Left colon (tissue), 2 donors: ENCODE measurements at regions of chr3 and their contacts with region 1.

Region 1: GRCh38 chr3:27467545-27467944 is 16.6 kb downstream of the SLC4A7 start:
- DNase-seq: no peak
- ATAC-seq: peak; percentile 69

Region 2: DNA sequence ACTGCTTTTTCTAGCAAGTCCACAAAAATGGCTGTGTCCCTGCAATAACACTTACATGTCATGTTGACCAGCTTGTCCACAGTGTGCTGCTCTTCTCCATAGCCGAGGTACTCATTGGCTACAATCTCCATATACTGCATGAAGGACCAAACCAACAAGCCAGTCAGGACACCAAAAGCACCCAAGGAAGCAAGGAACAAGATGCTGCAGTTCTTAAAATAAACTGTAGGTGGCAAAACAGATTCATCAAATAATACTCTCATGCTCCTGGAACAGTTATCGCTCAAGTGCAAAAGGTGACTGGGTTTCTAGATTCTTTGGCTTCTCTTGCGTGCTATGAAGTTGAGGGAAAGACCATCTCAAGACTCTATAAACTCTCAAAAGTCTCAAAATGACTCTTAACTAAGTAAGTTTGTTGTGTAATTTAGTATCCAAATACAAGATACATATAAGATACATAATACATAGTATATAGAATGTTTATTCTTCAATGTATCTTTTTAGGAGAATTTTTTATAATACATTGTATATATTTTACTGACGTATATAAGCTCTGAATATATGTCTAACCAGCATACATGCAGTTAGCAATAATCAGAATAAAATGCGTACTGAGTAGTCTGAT is 155.4 kb before region 1 on chr3:
- intact Hi-C with region 1: loop called in 1 of 2 experiments (anchors 10 kb)
- DNase-seq: no peak
- ATAC-seq: peak; percentile 74